ENCODE measurements at regions of chr3 and their contacts with region 1.

Region 1: GRCh38 chr3:94004301-94004910 is 24.0 kb downstream of the STX19 start:
- DNase-seq: no peak
- H3K4me3 ChIP-seq: peak overlapping the region; percentile 11; the same call in 1 of the 2 replicates
- H3K27me3 ChIP-seq: no peaks in the 10 kb centered on the region
- CTCF ChIP-seq: peak; percentile 78

Region 2: DNA sequence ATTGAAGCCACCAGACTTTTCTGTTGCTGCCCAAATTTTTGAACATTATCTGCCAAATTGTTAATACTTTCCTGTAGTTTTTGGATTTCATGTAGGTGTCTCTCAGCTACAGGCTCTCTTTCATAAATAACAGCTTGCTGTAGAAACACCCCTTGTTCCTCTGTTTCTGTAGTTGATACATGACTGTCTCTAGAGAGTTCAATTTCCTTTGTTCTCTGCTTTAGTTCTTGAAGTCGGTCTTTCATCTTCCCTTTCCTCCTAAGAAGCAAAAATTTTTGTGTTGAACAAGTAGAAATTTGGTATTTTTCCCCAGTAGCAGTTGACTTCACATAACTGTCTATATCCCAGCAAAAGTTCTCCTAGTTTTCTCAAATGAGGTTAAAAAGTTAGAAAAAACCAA is 10.6 kb after region 1 on chr3:
- CTCF ChIA-PET with region 1: interaction called, 17 read pairs
- POLR2A ChIA-PET with region 1: no interaction called
- DNase-seq: no peak
- H3K4me3 ChIP-seq: no peak overlapping the region
- H3K27me3 ChIP-seq: no peaks in the 10 kb centered on the region
- CTCF ChIP-seq: no peak

Region 3: DNA sequence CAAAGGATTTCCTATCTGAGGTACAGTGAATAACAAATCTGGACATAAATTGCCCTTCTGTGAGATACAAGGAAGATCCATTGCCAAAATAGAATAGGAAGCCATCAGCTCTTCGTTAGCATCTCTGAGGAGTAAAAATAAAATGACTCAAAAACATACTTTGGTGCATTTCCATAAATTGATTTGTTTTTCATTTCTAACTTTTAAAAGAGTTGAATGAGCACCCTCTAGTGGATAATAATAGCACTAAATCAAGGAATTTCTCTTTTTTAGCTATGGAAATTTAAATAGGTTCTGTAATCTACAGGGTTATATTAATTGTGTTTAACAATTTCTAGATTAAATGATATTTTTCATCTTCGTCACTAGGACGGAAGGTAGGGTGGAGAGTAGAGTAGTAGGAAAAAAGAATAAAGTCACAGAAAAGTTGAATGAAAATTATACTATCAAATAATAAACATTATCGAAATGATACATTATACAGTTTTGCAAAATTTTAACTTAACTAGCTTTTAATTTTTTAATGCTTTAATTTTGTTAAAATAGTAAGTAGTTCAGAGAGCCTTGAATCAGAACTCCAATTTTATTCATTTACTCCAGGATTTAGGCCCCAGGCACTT is 64.9 kb after region 1 on chr3:
- CTCF ChIA-PET with region 1: interaction called, 16 read pairs
- POLR2A ChIA-PET with region 1: no interaction called
- DNase-seq: no peak
- H3K4me3 ChIP-seq: no peak overlapping the region
- H3K27me3 ChIP-seq: no peaks in the 10 kb centered on the region
- CTCF ChIP-seq: peak; percentile 35; the same call in 1 of the 2 replicates

Measured in BJ (cell line).